ENCODE measurements at regions of chr21 and their contacts with region 1.

Region 1: DNA sequence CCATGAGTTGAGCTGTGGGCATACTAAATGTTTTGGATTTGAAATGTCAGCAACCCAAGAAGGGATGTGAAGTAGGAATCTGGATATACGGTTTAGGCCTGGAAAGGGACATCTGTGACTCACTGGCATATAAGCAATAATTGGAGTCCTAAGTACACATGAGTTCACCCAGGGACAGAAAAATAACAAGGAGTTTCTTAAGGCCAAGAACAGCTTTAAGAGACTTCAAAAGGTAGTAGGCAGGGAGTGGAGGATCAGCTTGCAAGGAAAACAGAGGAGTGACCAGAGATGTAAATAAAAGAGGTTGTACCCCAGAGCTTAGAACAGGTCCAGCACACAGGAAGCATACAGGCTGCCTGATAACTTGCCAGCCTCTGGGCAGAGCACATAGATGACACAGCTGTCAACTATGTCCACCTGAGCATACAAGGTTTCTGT is 28.1 kb downstream of the TMEM50B start:
- DNase-seq: no peak
- ATAC-seq: no peak
- H3K4me3 ChIP-seq: no peak overlapping the region
- H3K27ac ChIP-seq: no peak overlapping the region
- H3K4me1 ChIP-seq: no peaks in the 10 kb centered on the region
- H3K27me3 ChIP-seq: no peaks in the 10 kb centered on the region
- CTCF ChIP-seq: no peak
- EP300 ChIP-seq: no peak
- POLR2A ChIP-seq: no peak
- RAD21 ChIP-seq: no peak

Region 2: DNA sequence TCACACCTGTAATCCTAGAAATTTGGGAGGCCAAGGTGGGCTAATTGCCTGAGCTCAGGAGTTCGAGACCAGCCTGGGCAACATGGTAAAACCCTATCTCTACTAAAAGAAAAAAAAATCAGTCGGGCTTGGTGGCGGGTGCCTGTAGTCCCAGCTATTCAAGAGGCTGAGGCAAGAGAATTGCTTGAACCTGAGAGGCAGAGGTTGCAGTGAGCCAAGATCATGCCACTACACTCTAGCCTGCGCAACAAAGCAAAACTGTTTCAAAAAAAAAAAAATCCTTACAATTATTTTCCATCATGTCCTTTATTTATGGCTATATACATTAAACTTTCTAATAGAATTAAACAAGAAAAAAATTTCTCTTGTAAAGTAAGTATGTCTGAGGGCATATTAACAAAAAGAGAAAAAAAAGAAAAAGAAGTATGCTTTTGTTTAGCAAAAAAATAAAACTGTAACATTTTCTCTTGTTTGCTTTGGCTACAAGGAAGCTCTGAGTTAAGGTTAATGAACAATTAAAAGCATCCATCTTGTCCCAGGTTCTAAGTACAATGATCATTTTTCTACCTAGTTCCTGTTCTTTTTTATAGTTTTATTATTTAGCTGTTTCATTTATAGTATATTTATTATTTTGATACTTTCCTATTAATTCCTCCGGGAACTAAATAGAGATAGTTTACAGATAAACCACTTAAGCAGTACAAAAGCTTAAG is 10.0 kb after region 1 on chr21:
- CTCF ChIA-PET with region 1: interaction called, 10 read pairs
- POLR2A ChIA-PET with region 1: no interaction called
- RAD21 ChIA-PET with region 1: no interaction called
- SMC1A ChIA-PET with region 1: interaction called, 8 read pairs
- in situ Hi-C with region 1: no loop called
- intact Hi-C with region 1: no loop called
- DNase-seq: no peak
- ATAC-seq: no peak
- H3K4me3 ChIP-seq: no peak overlapping the region
- H3K27ac ChIP-seq: no peak overlapping the region
- H3K4me1 ChIP-seq: no peaks in the 10 kb centered on the region
- H3K27me3 ChIP-seq: no peaks in the 10 kb centered on the region
- CTCF ChIP-seq: no peak
- EP300 ChIP-seq: no peak
- POLR2A ChIP-seq: no peak
- RAD21 ChIP-seq: no peak

Measured in GM12878 (cell line).